HAP-1 (cell line): ENCODE measurements at regions of chr1 and their contacts with region 1.

Region 1: DNA sequence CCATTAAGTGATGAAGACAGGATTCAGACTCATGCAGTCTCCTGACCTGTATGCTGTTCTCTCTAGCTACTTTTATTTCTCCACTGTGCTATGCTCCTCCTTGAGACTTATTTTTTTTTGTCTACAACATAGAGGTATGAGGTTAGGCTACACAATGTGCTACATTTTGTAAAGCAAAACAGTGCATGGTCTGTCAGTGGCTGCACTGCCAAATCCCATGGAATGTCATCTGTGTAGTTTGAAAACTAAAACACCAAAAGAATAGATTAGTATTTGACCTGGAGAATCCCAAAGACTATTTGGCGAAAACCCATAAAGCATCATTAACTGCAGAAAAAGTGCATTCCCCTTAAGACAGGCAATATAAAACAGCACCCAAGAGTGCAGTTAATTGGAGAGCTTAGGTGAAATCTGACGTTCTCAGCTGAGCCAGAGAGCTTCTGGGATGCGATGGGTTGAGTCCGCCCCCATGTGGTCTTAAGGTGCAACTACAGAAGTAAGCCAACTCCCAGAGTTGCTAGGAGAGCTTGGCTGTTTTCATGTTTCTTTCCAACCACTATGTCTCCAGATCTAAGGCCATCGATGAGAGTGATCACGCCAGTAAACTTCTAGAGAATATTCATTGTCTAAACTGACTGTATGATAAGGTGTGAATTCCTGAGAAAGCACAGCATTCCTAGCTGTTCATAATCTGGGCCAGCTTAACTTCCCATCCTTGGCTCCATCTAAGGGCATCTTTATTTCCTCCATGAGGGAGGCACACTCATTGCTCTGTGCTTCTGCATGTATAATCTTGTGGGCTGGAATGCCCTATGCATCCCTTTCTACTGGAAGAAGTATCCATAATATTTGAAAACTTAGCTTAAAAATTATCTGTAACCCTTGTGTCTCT is 20.7 kb upstream of the CYP2J2 start:
- DNase-seq: peak; percentile 59 to 61
- H3K4me3 ChIP-seq: no peak overlapping the region
- H3K4me1 ChIP-seq: no peaks in the 10 kb centered on the region
- H3K27me3 ChIP-seq: peaks cover 16% of the 10 kb centered on the region

Region 2: DNA sequence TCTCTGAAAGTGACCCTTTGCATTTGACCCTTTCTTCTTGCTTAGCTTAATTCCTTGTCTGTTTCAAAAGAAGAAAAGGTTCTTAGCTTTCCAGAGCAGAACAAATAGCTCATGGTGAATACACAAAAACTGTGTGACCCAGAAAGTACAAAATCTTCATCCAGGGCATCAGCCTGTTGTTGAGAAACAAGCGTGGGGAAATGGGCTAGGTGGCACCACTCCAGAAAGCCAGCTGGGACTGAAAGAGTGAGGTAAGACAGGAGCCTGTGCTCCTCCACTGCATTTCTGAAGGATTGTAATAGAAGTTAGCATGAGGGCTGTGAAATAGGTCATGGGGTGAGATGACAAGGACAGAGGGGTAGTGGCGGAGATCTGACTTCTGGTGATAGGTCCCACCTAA is 66.6 kb before region 1 on chr1:
- in situ Hi-C with region 1: loop called (anchors 10 kb)
- DNase-seq: no peak
- H3K4me3 ChIP-seq: no peak overlapping the region
- H3K4me1 ChIP-seq: no peaks in the 10 kb centered on the region
- H3K27me3 ChIP-seq: peaks cover 7% of the 10 kb centered on the region; the same call in 1 of the 2 replicates